ENCODE measurements at regions of chr6 and their contacts with region 1.

Region 1: DNA sequence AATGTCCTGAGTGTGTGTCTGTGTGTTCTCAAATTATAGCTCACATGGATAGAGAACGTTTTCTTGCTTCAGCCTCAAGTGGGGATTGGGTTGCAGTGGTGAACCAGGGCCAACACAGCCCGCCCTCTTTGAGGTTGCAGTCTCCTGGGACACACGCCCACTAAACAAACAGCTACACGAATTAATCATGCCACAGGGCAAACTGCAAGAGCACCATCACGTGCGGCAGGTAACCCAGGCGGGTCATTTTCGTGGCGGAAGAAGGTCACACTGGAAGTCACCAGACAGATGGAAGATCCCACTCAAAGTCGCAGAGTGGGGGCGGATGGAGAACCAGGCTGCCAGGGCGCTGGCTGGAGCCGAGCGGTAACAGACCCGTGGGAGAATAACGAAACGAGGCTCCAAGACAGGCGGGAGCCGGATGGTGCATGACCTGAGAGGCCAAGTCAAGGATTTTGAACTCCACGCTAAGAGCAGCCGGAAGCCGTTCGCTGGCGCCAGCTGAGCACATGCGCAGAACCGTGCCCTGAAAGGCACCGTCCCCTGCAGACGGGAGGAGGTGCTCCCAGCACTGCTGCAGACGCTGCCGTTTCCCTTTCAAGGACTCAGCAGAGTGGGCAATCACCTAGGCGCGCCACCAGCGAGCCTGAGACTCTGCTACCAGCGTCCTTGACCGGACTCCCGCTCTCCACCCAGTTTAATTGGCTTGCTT is 10.7 kb downstream of the DLL1 start:
- DNase-seq: peak; percentile 54 to 89 (median 84)
- ATAC-seq: peak; percentile 61 to 82
- H3K4me3 ChIP-seq: no peak overlapping the region
- H3K27ac ChIP-seq: peak overlapping the region; percentile 61
- H3K4me1 ChIP-seq: peaks cover 8% of the 10 kb centered on the region
- H3K27me3 ChIP-seq: no peaks in the 10 kb centered on the region

Region 2: DNA sequence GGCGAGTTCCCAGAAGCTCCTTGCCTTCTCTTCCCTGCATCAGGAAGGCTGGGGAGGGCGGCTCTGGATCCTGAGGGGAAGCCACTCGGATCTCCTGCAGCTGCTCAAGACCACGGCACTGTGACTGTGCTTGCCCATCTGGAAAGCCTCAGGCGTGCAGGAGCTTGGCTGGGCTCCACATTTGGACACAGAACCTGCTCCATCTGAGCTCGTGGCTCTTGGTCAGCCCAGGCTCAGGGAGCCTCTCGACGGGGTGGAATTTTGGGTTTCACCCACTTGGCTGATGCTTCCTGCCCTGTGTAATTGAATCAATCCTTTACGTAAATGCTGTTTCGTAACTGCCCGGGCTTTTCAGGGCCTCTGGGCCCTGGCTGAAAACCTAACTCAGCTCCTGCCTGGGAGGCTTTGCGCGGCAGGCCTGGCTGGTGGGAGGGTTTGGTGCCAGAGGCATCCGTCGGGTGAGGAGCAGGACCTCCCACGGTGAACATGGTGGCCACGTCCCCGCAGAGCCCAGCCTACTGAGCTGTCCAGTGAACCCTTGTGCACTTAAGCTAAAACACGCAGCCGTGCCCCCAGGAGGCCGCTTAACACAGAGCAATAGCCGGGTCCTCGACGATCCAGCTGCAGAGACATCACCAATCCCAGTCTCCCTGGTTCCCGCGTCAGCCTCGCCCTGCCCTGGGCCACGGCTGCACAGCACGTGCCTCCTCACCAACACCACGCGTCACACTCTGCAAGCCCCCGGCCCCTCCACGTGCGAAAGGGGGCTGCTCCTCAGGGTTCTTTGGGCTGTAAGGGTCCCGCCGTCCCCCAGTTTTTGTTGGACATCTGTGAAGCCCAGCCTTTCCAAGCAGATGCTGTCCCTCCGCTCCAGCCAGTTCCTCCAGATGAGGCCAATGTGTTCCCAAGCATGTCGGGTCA is 230.2 kb before region 1 on chr6:
- intact Hi-C with region 1: loop called in 2 of 4 experiments (anchors 10 kb)
- DNase-seq: peak; percentile 87 to 91 (median 89)
- ATAC-seq: peak; percentile 81 to 86
- H3K4me3 ChIP-seq: no peak overlapping the region
- H3K27ac ChIP-seq: no peak overlapping the region
- H3K4me1 ChIP-seq: peaks cover 6% of the 10 kb centered on the region
- H3K27me3 ChIP-seq: no peaks in the 10 kb centered on the region

Region 3: GRCh38 chr6:170178561-170179477 is 101.3 kb before region 1 on chr6:
- intact Hi-C with region 1: loop called in 1 of 4 experiments (anchors 10 kb)
- DNase-seq: peak; percentile 64 to 77 (median 69)
- ATAC-seq: peak; percentile 66 to 86
- H3K4me3 ChIP-seq: no peak overlapping the region
- H3K27ac ChIP-seq: no peak overlapping the region
- H3K4me1 ChIP-seq: no peaks in the 10 kb centered on the region
- H3K27me3 ChIP-seq: no peaks in the 10 kb centered on the region

Measured in right cardiac atrium (tissue), 5 donors.